IMR-90 (cell line): ENCODE measurements at regions of chr4 and their contacts with region 1.

Region 1: DNA sequence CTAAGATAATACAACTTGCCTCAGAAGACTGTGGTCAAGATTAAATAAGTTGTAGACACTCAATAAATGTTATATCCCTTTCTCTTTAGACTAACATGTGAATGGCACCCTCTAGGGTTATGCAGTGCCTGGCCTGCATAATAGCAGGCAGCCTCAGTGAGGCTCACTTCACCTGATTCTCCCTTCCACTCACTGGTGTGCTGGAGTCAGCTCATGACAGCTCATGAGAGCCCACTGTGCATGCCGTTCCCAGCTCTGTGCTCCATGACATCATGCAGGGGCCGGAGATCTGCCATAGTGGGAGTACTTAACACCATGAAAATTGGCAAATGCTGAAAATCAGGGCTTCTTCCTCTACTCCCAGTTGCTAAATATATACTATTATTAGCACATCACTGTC is 64.5 kb downstream of the TEC start:
- DNase-seq: peak; percentile 1
- ATAC-seq: no peak
- H3K4me3 ChIP-seq: no peak overlapping the region
- H3K27ac ChIP-seq: no peak overlapping the region
- H3K4me1 ChIP-seq: no peaks in the 10 kb centered on the region
- H3K27me3 ChIP-seq: no peaks in the 10 kb centered on the region
- CTCF ChIP-seq: no peak
- POLR2A ChIP-seq: no peak
- RAD21 ChIP-seq: no peak

Region 2: DNA sequence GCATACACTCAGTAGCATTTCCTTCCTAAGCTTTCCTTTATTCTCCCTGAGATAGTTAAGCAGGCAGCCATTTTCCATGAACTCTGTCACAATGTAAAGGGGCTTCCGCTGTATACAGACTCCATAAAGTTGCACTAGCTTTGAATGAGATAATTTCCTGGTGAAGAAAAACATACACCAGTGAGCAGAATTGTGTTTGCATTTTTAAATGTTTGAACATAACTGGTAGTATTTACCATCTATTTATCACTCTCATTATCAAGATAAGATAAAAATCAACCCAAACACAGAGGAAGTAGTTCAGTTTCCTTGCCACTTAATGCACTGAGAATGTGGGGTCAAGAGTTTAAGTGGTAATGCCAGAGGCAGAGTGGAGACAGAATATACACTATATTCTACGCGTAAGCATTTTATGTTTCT is 125.1 kb before region 1 on chr4:
- CTCF ChIA-PET with region 1: no interaction called
- POLR2A ChIA-PET with region 1: no interaction called
- dilution Hi-C with region 1: no loop called
- in situ Hi-C with region 1: no loop called
- intact Hi-C with region 1: no loop called
- DNase-seq: no peak
- ATAC-seq: no peak
- H3K4me3 ChIP-seq: no peak overlapping the region
- H3K27ac ChIP-seq: no peak overlapping the region
- H3K4me1 ChIP-seq: no peaks in the 10 kb centered on the region
- H3K27me3 ChIP-seq: no peaks in the 10 kb centered on the region; the same call in none of the 2 replicates
- CTCF ChIP-seq: no peak
- POLR2A ChIP-seq: no peak
- RAD21 ChIP-seq: no peak

Region 3: GRCh38 chr4:48141048-48141447 is 64.1 kb before region 1 on chr4:
- CTCF ChIA-PET with region 1: no interaction called
- POLR2A ChIA-PET with region 1: no interaction called
- dilution Hi-C with region 1: no loop called
- in situ Hi-C with region 1: no loop called
- intact Hi-C with region 1: no loop called
- DNase-seq: peak; percentile 56
- ATAC-seq: peak; percentile 84
- H3K4me3 ChIP-seq: no peak overlapping the region
- H3K27ac ChIP-seq: no peak overlapping the region
- H3K4me1 ChIP-seq: no peaks in the 10 kb centered on the region
- H3K27me3 ChIP-seq: no peaks in the 10 kb centered on the region
- CTCF ChIP-seq: peak; percentile 65
- POLR2A ChIP-seq: no peak
- RAD21 ChIP-seq: peak; percentile 63

Region 4: DNA sequence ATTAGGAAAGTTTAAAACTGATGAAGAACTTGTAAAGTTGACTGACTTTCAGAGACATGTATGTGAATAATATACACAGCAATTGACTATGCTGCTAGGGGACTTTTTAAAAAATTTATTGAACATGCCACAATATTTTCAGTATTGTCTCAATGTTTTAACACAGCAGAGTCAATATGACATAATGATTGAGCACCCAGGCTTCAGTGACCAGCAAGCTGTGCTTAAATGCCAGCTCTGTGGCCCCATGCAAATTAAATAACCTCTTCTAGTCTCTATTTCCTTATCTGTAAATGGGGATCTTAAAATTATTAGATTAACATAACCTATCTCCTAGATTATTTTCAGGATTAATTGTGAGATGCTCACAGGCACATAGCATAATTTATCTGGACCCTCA is 14.3 kb before region 1 on chr4:
- CTCF ChIA-PET with region 1: no interaction called
- POLR2A ChIA-PET with region 1: no interaction called
- dilution Hi-C with region 1: no loop called
- in situ Hi-C with region 1: no loop called
- intact Hi-C with region 1: no loop called
- DNase-seq: no peak
- ATAC-seq: no peak
- H3K4me3 ChIP-seq: no peak overlapping the region
- H3K27ac ChIP-seq: no peak overlapping the region
- H3K4me1 ChIP-seq: peaks cover 2% of the 10 kb centered on the region; the same call in 1 of the 2 replicates
- H3K27me3 ChIP-seq: no peaks in the 10 kb centered on the region; the same call in 1 of the 2 replicates
- CTCF ChIP-seq: no peak
- POLR2A ChIP-seq: no peak
- RAD21 ChIP-seq: no peak

Region 5: GRCh38 chr4:48243887-48244286 is 38.8 kb after region 1 on chr4:
- CTCF ChIA-PET with region 1: no interaction called
- POLR2A ChIA-PET with region 1: no interaction called
- dilution Hi-C with region 1: no loop called
- in situ Hi-C with region 1: no loop called
- intact Hi-C with region 1: loop called (anchors 5 kb)
- DNase-seq: no peak
- ATAC-seq: no peak
- H3K4me3 ChIP-seq: no peak overlapping the region
- H3K27ac ChIP-seq: no peak overlapping the region
- H3K4me1 ChIP-seq: no peaks in the 10 kb centered on the region
- H3K27me3 ChIP-seq: peaks cover 1% of the 10 kb centered on the region; the same call in 1 of the 2 replicates
- CTCF ChIP-seq: no peak
- POLR2A ChIP-seq: no peak
- RAD21 ChIP-seq: no peak